Activated naive CD4-positive, alpha-beta T cell treated with anti-CD3 and anti-CD28 coated beads for 36 hours (primary cell): ENCODE measurements at regions of chr10 and their contacts with region 1.

Region 1: DNA sequence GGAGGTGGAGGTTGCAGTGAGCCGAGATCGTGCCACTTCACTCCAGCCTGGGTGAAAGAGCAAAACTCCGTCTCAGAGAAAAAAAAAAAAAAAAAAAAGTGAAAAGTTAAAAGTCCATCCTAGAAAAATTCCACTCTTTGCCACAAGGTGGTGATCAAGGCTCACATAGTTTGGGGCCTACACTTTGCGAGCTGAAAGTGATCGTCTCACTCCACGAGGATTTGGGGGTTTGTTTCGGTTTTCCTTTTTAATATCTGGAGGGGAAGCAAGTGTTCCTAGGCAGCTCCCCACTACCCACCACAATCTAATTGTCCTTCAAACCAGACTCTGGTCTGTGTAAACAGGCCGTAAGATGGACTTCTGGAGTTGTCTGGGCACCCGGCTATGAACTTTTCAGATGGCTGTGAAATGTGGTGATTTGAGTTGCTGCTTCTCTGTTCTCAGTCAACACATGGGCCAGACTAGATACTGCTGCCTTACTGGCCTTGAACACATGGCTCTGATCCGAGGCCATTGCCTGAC is 27.1 kb downstream of the PRLHR start:
- DNase-seq: peak; percentile 68
- H3K4me3 Mint-ChIP-seq: no peak overlapping the region
- H3K27ac Mint-ChIP-seq: no peak overlapping the region
- H3K4me1 Mint-ChIP-seq: peaks cover 7% of the 10 kb centered on the region
- H3K27me3 Mint-ChIP-seq: no peaks in the 10 kb centered on the region

Region 2: GRCh38 chr10:118668228-118668952 is 100.0 kb after region 1 on chr10:
- CTCF ChIA-PET with region 1: interaction called, 4 read pairs
- intact Hi-C with region 1: loop called (anchors 1 kb)
- DNase-seq: no peak
- H3K4me3 Mint-ChIP-seq: no peak overlapping the region
- H3K27ac Mint-ChIP-seq: no peak overlapping the region
- H3K4me1 Mint-ChIP-seq: peaks cover 38% of the 10 kb centered on the region
- H3K27me3 Mint-ChIP-seq: no peaks in the 10 kb centered on the region

Region 3: GRCh38 chr10:118720685-118721538 is 152.5 kb after region 1 on chr10:
- CTCF ChIA-PET with region 1: interaction called, 66 read pairs
- intact Hi-C with region 1: loop called (anchors 1 kb)
- DNase-seq: peak; percentile 82
- H3K4me3 Mint-ChIP-seq: no peak overlapping the region
- H3K27ac Mint-ChIP-seq: no peak overlapping the region
- H3K4me1 Mint-ChIP-seq: peaks cover 10% of the 10 kb centered on the region
- H3K27me3 Mint-ChIP-seq: no peaks in the 10 kb centered on the region

Region 4: GRCh38 chr10:118850418-118851061 is 282.2 kb after region 1 on chr10:
- CTCF ChIA-PET with region 1: interaction called, 10 read pairs
- intact Hi-C with region 1: loop called (anchors 1 kb)
- DNase-seq: peak; percentile 93
- H3K4me3 Mint-ChIP-seq: no peak overlapping the region
- H3K27ac Mint-ChIP-seq: no peak overlapping the region
- H3K4me1 Mint-ChIP-seq: no peaks in the 10 kb centered on the region
- H3K27me3 Mint-ChIP-seq: peaks cover 2% of the 10 kb centered on the region